ENCODE measurements at regions of chr13 and their contacts with region 1.

Region 1: DNA sequence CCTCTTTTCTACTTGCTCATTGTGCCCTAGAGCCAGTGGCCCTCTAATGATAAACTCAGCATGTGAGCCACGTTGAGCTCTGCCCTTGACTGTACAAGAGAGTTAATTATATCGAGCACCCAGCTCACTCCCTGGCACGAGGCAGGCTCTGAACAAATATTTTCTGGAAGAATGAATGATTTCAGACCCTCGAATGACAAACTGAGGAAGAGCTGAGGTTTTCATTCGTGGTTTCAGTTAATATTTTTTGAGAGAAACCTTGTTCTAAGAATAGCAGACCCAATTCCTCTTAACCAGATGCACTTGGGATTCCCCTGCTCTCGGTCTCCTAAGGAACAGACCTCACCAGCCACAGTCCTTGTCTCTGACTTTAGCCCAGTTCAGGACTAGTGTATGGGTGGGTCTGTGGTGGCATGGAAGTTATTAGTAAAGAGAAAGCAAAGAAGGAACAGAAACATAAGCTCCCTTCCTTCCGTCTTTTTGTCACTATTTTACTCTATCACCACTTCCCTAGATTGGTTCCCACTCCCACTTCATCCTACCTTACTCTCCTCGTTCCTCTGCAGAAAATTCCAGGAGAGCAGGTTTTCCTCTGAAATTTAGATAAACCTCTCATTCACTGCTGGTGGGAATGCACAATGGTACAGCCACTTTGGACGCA is 22.1 kb upstream of the WDFY2 start:
- DNase-seq: no peak
- ATAC-seq: peak in 2 of 4 donors; percentile 29 to 71
- H3K4me3 ChIP-seq: no peak overlapping the region
- H3K27ac ChIP-seq: no peak overlapping the region
- H3K4me1 ChIP-seq: no peaks in the 10 kb centered on the region
- H3K27me3 ChIP-seq: no peaks in the 10 kb centered on the region
- CTCF ChIP-seq: no peak

Region 2: DNA sequence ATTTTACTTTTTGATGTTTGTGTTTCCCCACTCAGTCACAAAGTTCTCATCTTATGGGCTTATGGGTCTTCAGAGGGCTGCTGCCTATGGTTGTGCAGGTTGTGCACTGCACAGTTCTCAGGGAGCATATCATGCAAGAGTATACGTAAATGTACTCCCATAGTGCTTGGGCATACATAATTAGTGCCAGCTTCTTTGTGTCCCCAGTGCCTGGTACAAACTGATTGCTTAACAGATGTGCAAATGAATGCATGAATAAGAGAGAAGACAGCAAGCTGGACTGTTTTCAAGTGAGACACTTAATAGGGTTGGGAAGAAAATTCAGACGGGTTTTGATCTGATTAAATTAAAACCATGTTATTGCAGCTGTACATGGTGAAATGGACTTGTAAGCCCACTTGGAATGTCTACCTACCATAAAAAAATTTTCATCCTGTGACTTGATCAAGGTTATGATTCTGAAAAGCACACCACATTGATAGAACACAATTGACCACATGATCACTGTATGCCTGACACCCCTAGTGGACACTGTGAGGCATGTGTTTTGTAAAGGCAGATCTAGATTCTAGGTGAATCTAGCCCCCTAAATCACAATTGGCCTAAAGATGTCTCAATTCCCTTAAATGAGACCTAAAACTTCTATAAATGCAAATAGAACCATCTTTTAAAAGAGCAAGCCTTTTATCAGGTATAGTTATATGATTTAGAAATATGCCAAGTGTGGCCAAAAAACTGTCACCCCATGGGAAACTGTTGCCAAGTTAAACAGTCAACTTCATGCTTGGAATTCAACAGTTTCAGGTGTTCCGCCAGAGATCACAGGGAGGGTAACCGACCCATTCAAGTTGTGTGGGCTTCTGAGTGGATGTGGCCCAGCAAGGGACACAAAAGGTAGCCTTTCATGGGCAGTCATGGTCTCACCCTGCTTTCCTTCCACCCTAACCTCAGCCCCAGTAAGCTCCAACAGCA is 312.1 kb before region 1 on chr13:
- intact Hi-C with region 1: no loop called
- DNase-seq: peak in 2 of 6 donors; percentile 18 to 37
- ATAC-seq: peak; percentile 71 to 83 (median 80)
- H3K4me3 ChIP-seq: no peak overlapping the region
- H3K27ac ChIP-seq: peak overlapping the region in 2 of 4 donors; percentile 13 to 28
- H3K4me1 ChIP-seq: peaks cover 9 to 27% (median 14%) of the 10 kb centered on the region in 3 donors
- H3K27me3 ChIP-seq: peaks cover 0 to 3% (median 0%) of the 10 kb centered on the region in 4 donors
- CTCF ChIP-seq: peak in 3 of 4 donors; percentile 19 to 45 (median 29)

Region 3: GRCh38 chr13:51494156-51494555 is 68.0 kb before region 1 on chr13:
- intact Hi-C with region 1: loop called in 1 of 3 experiments (anchors 10 kb)
- DNase-seq: no peak
- ATAC-seq: no peak
- H3K4me3 ChIP-seq: no peak overlapping the region
- H3K27ac ChIP-seq: no peak overlapping the region
- H3K4me1 ChIP-seq: no peaks in the 10 kb centered on the region
- H3K27me3 ChIP-seq: no peaks in the 10 kb centered on the region
- CTCF ChIP-seq: no peak

Region 4: GRCh38 chr13:51502153-51502651 is 59.9 kb before region 1 on chr13:
- intact Hi-C with region 1: loop called in 2 of 3 experiments (anchors 5 to 10 kb)
- DNase-seq: no peak
- ATAC-seq: no peak
- H3K4me3 ChIP-seq: no peak overlapping the region
- H3K27ac ChIP-seq: no peak overlapping the region
- H3K4me1 ChIP-seq: peaks cover 0 to 7% (median 0%) of the 10 kb centered on the region in 3 donors
- H3K27me3 ChIP-seq: no peaks in the 10 kb centered on the region
- CTCF ChIP-seq: no peak